Activated naive CD4-positive, alpha-beta T cell treated with anti-CD3 and anti-CD28 coated beads for 36 hours (primary cell): ENCODE measurements at regions of chr18 and their contacts with region 1.

Region 1: DNA sequence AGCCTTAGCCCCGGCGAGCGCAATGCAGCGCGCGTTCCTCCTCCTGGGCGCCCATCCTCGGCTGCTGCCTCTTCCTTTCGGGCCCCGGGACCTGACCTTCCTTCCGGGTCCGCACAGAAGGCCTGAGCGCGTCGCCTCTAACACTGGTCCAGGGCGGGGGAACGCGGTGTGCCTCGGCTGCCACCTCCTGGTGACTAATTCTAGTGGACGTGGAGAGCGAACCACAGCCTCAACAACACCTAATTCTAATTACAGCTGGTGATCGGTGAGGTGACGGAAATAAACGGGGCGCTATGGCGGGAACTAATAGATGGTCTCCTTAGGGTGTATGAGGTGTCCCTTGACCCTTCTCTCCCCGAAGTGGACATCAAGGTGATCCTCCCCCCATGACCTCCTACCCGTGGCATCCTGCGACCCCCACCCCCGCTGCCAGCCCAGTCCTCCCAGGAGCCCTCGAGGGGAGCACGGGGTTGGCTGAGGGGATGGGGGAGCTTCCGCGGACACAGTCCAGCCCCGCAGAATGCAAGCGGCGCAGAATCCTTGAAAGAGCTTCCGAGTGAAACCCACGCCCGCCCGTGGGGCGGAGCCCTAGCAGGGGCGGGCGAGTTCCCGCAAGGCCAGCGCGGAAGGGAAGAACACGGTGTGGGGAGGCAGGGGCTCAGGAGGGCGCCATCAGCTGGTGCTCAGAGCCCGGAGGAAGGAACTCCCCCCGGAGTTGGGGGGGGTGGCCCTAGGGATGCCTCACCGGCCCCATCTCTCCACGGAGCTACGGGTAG is 12.8 kb upstream of the HMSD start:
- DNase-seq: peak; percentile 77
- H3K4me3 Mint-ChIP-seq: no peak overlapping the region
- H3K27ac Mint-ChIP-seq: no peak overlapping the region
- H3K4me1 Mint-ChIP-seq: peaks cover 2% of the 10 kb centered on the region
- H3K27me3 Mint-ChIP-seq: peaks cover 13% of the 10 kb centered on the region

Region 2: DNA sequence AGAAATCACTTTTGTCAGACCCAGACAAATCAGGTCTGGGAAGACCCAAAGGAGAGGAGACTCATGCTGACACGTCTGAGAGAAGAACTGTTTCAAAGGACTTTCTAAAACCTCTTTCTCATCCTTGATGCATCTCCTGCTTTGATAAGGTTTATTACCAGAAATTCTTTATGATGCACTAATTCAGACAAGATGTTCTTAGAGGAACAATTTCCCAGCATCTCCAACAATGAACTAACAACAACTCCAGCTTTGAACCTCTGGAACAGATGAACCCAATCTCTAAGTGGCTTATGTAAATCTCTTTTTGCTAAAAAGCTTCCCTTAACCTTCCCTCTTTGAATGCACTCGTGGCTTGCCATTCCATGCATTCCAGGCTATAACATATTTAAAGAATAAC is 249.5 kb before region 1 on chr18:
- CTCF ChIA-PET with region 1: no interaction called
- intact Hi-C with region 1: no loop called
- DNase-seq: no peak
- H3K4me3 Mint-ChIP-seq: no peak overlapping the region
- H3K27ac Mint-ChIP-seq: no peak overlapping the region
- H3K4me1 Mint-ChIP-seq: no peaks in the 10 kb centered on the region
- H3K27me3 Mint-ChIP-seq: peaks cover 3% of the 10 kb centered on the region

Region 3: DNA sequence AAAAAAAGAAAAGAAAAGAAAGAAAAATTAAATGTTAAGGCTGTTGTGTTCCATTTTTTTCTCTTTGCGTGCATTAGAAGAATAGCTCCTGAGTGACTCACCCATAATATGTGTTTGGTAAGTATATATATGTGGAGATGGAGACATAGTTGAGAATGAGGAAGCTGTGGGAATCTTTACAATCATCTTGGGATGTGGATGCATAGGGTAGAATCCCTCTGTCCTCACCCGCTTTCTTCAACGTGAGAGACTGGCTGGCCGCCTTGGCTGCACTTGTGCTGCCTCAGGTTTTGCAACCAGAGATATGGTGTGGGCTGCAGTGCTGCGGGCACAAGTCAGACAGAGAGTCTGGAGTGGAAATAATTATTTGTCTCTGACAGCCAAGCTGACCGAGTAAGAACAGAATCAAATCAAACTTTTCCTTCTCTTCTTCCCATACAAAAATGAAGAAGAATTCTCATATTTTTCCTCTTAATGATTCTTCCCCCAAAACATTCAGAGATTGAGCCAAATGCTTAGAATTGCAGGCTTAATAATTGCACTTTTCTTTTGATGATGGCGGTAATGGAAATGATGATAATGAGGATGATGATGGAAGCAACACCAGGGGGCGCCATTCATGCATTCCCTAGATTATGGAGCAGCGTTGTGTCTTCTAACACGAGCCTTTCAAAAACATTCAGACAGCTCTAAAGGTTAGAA is 112.7 kb before region 1 on chr18:
- CTCF ChIA-PET with region 1: interaction called, 22 read pairs
- intact Hi-C with region 1: loop called (anchors 1 kb)
- DNase-seq: peak; percentile 60
- H3K4me3 Mint-ChIP-seq: no peak overlapping the region
- H3K27ac Mint-ChIP-seq: no peak overlapping the region
- H3K4me1 Mint-ChIP-seq: no peaks in the 10 kb centered on the region
- H3K27me3 Mint-ChIP-seq: peaks cover 5% of the 10 kb centered on the region

Region 4: DNA sequence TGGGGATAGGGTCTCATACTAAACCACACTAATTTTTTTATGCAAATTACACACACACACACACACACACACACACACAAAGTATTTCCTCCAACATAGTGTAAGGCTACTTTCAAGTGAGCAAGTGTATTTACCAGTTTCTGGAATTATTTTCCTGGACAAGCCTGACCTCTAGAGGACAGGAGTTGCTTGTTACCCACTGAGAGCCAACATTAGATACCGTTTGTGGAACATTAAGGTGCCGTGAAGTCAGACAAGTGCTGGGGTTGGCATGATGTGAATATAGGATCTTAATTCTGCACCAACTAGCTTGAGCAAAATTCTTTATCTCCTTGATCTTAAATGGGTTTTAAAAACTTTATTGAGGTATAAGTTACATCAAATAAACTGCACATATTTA is 88.2 kb before region 1 on chr18:
- CTCF ChIA-PET with region 1: no interaction called
- intact Hi-C with region 1: loop called (anchors 2 kb)
- DNase-seq: no peak
- H3K4me3 Mint-ChIP-seq: no peak overlapping the region
- H3K27ac Mint-ChIP-seq: no peak overlapping the region
- H3K4me1 Mint-ChIP-seq: no peaks in the 10 kb centered on the region
- H3K27me3 Mint-ChIP-seq: peaks cover 14% of the 10 kb centered on the region

Region 5: DNA sequence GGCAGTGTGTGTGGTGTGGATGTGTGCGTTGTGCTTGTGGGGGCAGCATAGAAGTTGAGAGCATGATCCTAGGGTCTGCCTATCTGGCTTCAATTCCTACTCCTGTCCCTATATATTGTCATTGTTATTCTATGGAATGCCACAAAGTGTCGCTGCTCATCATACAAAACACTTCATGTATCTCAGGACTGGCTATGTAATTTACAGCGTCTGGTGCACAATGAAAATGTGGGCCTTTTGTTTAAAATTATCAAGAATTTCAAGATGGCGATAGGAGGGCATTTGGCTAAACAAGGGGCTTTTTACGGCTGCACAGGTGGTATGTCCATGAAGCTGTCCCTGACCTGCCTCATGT is 45.4 kb before region 1 on chr18:
- CTCF ChIA-PET with region 1: interaction called, 7 read pairs
- intact Hi-C with region 1: loop called (anchors 1 kb)
- DNase-seq: no peak
- H3K4me3 Mint-ChIP-seq: no peak overlapping the region
- H3K27ac Mint-ChIP-seq: no peak overlapping the region
- H3K4me1 Mint-ChIP-seq: peaks cover 4% of the 10 kb centered on the region
- H3K27me3 Mint-ChIP-seq: peaks cover 12% of the 10 kb centered on the region

Region 6: DNA sequence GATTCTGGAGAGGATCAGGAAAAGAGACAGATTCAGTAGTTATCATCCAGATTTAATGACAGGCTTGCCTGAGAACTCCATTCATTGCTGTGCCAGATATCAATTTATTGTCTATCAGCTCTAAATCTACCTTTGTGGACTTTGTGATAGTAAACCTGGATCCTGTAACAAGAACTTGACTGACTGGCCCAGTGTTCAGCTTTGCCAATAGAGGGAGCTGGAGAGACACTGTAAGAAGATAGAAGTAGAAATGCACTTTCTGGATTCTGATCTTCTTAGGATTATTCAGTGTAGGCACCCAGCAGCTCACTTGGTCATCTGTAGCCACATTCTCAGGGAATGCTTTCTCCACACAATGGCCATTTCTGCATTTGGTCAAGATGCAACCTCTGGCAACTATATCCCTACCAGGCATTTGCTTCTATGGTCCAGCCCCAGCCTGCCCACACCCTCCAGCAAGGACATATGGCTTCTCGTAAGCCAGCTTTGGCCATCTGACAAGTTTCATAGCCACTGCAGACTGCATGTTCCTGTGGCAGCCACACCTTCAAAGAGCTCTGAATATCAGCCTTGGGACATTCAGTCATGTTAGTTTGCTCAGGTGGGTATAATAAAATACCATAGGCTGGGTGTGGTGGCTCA is 27.4 kb after region 1 on chr18:
- CTCF ChIA-PET with region 1: interaction called, 20 read pairs
- intact Hi-C with region 1: no loop called
- DNase-seq: peak; percentile 70
- H3K4me3 Mint-ChIP-seq: no peak overlapping the region
- H3K27ac Mint-ChIP-seq: no peak overlapping the region
- H3K4me1 Mint-ChIP-seq: peaks cover 16% of the 10 kb centered on the region
- H3K27me3 Mint-ChIP-seq: peaks cover 11% of the 10 kb centered on the region

Region 7: GRCh38 chr18:63994783-63995399 is 58.5 kb after region 1 on chr18:
- CTCF ChIA-PET with region 1: interaction called, 11 read pairs
- intact Hi-C with region 1: no loop called
- DNase-seq: peak; percentile 61
- H3K4me3 Mint-ChIP-seq: no peak overlapping the region
- H3K27ac Mint-ChIP-seq: no peak overlapping the region
- H3K4me1 Mint-ChIP-seq: peaks cover 5% of the 10 kb centered on the region
- H3K27me3 Mint-ChIP-seq: no peaks in the 10 kb centered on the region